ENCODE measurements at regions of chr10 and their contacts with region 1.

Region 1: GRCh38 chr10:49518982-49519578 is 19.8 kb downstream of the ERCC6 start:
- DNase-seq: peak in 3 of 7 donors; percentile 34 to 65 (median 44)
- H3K4me3 ChIP-seq: no peak overlapping the region
- H3K27ac ChIP-seq: no peak overlapping the region
- H3K4me1 ChIP-seq: no peaks in the 10 kb centered on the region
- H3K27me3 ChIP-seq: no peaks in the 10 kb centered on the region
- CTCF ChIP-seq: peak; percentile 46 to 73 (median 70)
- POLR2A ChIP-seq: no peak

Region 2: GRCh38 chr10:48976196-48976595 is 542.9 kb before region 1 on chr10:
- intact Hi-C with region 1: loop called in 1 of 2 experiments (anchors 10 kb)
- DNase-seq: peak; percentile 31 to 70 (median 49)
- H3K4me3 ChIP-seq: no peak overlapping the region
- H3K27ac ChIP-seq: no peak overlapping the region
- H3K4me1 ChIP-seq: no peaks in the 10 kb centered on the region
- H3K27me3 ChIP-seq: no peaks in the 10 kb centered on the region
- CTCF ChIP-seq: peak in 5 of 6 experiments; percentile 35 to 53 (median 37)
- POLR2A ChIP-seq: no peak

Region 3: DNA sequence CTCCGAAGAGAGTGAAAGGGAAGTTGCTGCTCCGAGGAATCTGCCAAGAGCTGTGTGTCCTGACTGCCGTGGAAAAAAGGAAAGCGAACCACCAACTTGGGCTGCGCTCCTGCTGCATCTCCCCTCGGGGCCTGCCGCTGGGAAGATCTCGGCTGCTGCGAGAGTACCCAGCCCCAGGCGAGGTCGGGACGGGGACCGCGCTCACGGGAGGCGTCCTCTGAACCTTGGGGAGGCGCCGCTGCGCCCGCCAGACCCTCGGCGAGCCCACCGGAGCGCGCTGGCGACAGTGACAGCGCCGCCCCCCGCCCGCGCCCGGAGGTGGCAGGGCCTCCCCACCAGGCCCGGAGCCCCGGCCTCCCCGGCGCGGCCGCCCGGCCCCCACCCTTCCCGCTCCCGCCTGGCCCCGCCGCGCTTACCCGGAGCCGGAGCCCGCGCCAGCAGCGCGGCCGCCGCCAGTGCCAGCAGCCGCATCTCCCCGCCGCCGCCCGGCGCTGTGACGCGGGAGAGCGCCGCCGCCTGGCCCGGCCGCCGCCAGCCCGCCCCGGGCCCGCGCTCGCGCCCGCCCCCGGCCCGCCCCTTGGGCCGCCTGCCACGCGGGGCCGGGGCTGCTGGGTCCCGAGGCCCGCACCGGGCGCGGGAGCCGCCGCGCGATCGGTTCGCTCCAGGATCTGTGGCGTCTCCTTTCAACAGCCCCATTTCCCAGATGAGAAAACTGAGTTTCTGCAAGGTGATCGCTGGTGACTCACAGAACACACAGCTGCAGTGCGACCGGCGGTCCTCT is 403.9 kb before region 1 on chr10 and contains the start of gene VSTM4:
- intact Hi-C with region 1: no loop called
- DNase-seq: peak; percentile 49 to 65 (median 61)
- H3K4me3 ChIP-seq: peak within 1 kb of the TSS in 3 of 4 donors; percentile 31 to 87 (median 39)
- H3K27ac ChIP-seq: peak within 1 kb of the TSS in 4 of 5 donors; percentile 71 to 92 (median 86)
- H3K4me1 ChIP-seq: peaks cover 38 to 46% of the 10 kb centered on the region in 2 donors
- H3K27me3 ChIP-seq: no peaks in the 10 kb centered on the region
- CTCF ChIP-seq: peak in 1 of 6 experiments; percentile 10
- POLR2A ChIP-seq: peak in 1 of 2 donors; percentile 34
- total RNA-seq, gene VSTM4: 43.9 to 136 (median 71.9) TPM

Region 4: DNA sequence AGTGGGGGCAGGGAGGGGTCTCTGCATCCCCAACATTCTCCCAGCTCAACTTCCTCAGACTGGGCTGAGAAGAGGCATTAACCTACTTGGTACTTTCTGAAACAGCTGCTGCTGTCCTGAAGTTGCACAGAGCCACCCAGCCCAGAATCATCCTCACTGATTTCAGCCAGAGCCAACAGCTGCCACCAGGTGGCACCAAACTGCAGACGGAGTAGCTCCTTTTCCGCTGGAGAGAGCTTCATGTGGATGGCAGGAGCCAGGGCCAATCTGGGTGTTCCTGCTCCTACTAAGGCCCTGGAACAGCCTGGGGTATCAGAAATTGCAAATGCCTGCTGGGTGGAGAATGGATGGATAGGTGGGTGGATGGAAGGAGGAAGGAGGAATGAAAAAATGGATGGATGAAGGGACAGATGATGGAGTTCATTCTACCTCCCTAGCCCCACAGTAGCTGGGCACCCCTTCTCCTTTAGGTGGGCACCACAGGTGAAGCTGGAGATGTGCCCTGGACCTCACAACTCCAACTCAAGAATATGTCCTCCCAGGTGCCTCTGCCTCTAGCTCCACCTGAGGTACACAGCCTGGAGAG is 111.4 kb before region 1 on chr10:
- intact Hi-C with region 1: loop called in 1 of 2 experiments (anchors 5 kb)
- DNase-seq: peak; percentile 76 to 95 (median 86)
- H3K4me3 ChIP-seq: no peak overlapping the region
- H3K27ac ChIP-seq: no peak overlapping the region
- H3K4me1 ChIP-seq: peaks cover 0 to 9% of the 10 kb centered on the region in 2 donors
- H3K27me3 ChIP-seq: peaks cover 3% of the 10 kb centered on the region
- CTCF ChIP-seq: peak; percentile 87 to 93 (median 90)
- POLR2A ChIP-seq: no peak

Measured in adrenal gland (tissue), 19 donors.